Naive thymus-derived CD4-positive, alpha-beta T cell (primary cell): ENCODE measurements at regions of chr9 and their contacts with region 1.

Region 1: GRCh38 chr9:70484210-70485130 is 70.0 kb upstream of the KLF9 start:
- DNase-seq: peak in 6 of 9 donors; percentile 13 to 38 (median 32)
- ATAC-seq: peak; percentile 85
- H3K4me3 ChIP-seq: no peak overlapping the region
- H3K4me3 Mint-ChIP-seq: no peak overlapping the region
- H3K27ac ChIP-seq: no peak overlapping the region
- H3K27ac Mint-ChIP-seq: peak overlapping the region in 1 of 9 donors; percentile 36
- H3K4me1 ChIP-seq: no peaks in the 10 kb centered on the region
- H3K4me1 Mint-ChIP-seq: peaks cover 4 to 26% (median 13%) of the 10 kb centered on the region in 7 donors
- H3K27me3 ChIP-seq: no peaks in the 10 kb centered on the region
- H3K27me3 Mint-ChIP-seq: peaks cover 0 to 10% (median 0%) of the 10 kb centered on the region in 5 donors

Region 2: GRCh38 chr9:70340572-70340971 is 143.9 kb before region 1 on chr9:
- CTCF ChIA-PET with region 1: no interaction called
- POLR2A ChIA-PET with region 1: no interaction called
- intact Hi-C with region 1: loop called in 1 of 2 experiments (anchors 1 kb)
- DNase-seq: peak in 5 of 9 donors; percentile 8 to 36 (median 24)
- ATAC-seq: no peak
- H3K4me3 ChIP-seq: no peak overlapping the region
- H3K4me3 Mint-ChIP-seq: no peak overlapping the region
- H3K27ac ChIP-seq: no peak overlapping the region
- H3K27ac Mint-ChIP-seq: no peak overlapping the region
- H3K4me1 ChIP-seq: no peaks in the 10 kb centered on the region
- H3K4me1 Mint-ChIP-seq: peaks cover 0 to 12% (median 4%) of the 10 kb centered on the region in 7 donors
- H3K27me3 ChIP-seq: no peaks in the 10 kb centered on the region
- H3K27me3 Mint-ChIP-seq: no peaks in the 10 kb centered on the region

Region 3: DNA sequence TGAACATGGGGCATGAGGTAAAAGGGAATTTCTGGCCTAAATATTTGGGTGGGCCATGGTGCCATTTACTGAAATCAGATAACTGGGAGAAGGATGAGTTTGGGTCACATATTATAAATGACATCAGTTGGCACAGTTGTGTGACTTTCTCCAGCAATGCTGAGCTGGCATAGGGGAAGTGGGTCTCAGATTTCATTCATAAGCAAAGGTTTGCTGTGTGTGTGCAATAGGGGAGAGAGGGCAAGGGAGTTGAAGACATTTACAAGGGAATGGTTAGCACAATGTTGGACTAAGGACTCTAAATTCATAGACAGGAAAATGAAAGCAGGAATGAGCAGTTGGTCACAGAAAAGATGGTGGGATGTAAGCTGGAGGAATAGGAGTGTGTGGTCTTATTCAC is 22.2 kb before region 1 on chr9:
- CTCF ChIA-PET with region 1: no interaction called
- POLR2A ChIA-PET with region 1: no interaction called
- intact Hi-C with region 1: no loop called
- DNase-seq: no peak
- ATAC-seq: no peak
- H3K4me3 ChIP-seq: no peak overlapping the region
- H3K4me3 Mint-ChIP-seq: no peak overlapping the region
- H3K27ac ChIP-seq: no peak overlapping the region
- H3K27ac Mint-ChIP-seq: peak overlapping the region in 3 of 9 donors; percentile 4 to 57 (median 32)
- H3K4me1 ChIP-seq: no peaks in the 10 kb centered on the region
- H3K4me1 Mint-ChIP-seq: peaks cover 0 to 13% (median 7%) of the 10 kb centered on the region in 7 donors
- H3K27me3 ChIP-seq: no peaks in the 10 kb centered on the region
- H3K27me3 Mint-ChIP-seq: no peaks in the 10 kb centered on the region

Region 4: DNA sequence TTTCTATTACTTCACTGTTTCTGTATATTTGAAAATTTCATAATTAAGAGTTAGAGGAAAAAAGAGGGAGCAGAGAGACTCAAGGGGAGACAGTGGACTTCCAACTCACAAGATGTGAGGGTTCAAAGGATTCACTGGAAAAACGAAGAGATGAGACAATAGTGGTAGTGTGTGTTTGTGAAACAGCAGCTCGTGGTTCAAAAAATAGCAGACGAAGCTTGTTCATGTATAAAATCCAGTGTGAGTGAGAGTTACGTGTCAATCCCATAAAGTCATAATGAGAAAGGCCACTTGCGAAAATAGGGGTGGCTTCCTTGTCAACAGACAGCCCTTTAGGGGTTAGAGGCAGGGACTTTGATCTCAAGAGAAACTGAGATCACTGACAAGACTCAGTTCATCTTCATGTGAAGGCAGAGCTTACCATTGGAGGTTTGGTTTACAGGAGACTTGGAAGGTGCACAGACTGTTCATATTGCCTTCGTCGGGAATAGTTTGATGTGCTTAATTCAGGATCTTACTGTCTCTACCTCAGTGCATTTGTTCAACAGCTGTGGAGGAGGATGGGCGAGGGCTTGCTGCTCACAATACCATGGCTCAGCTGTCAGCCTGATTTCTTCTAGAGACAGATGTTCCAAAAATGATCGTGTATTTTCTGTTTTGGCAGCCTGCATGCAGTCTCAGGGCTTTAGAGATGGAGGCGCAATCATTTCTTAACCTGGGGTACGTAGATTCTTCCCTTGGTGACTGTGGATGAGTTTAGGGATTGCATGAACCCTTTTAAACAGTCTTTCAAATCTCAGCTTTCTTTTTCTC is 35.6 kb after region 1 on chr9:
- CTCF ChIA-PET with region 1: no interaction called
- POLR2A ChIA-PET with region 1: no interaction called
- intact Hi-C with region 1: no loop called
- DNase-seq: no peak
- ATAC-seq: no peak
- H3K4me3 ChIP-seq: no peak overlapping the region
- H3K4me3 Mint-ChIP-seq: peak overlapping the region in 1 of 10 donors; percentile 68
- H3K27ac ChIP-seq: no peak overlapping the region
- H3K27ac Mint-ChIP-seq: peak overlapping the region in 3 of 9 donors; percentile 11 to 75 (median 20)
- H3K4me1 ChIP-seq: no peaks in the 10 kb centered on the region
- H3K4me1 Mint-ChIP-seq: peaks cover 0 to 23% (median 0%) of the 10 kb centered on the region in 7 donors
- H3K27me3 ChIP-seq: no peaks in the 10 kb centered on the region
- H3K27me3 Mint-ChIP-seq: no peaks in the 10 kb centered on the region